Stomach (tissue), 19 donors: ENCODE measurements at regions of chr22 and their contacts with region 1.

Region 1: GRCh38 chr22:22959147-22959827 is 71.7 kb downstream of the IGLL5 start:
- DNase-seq: peak; percentile 87 to 94
- H3K4me3 ChIP-seq: no peak overlapping the region
- H3K27ac ChIP-seq: peak overlapping the region in 1 of 5 donors; percentile 38
- H3K4me1 ChIP-seq: peaks cover 5 to 20% (median 11%) of the 10 kb centered on the region in 4 donors
- H3K27me3 ChIP-seq: peaks cover 0 to 13% (median 3%) of the 10 kb centered on the region in 3 donors
- CTCF ChIP-seq: peak in 6 of 7 experiments; percentile 14 to 99 (median 86)
- EP300 ChIP-seq: no peak
- POLR2A ChIP-seq: no peak

Region 2: GRCh38 chr22:22849640-22850610 is 109.4 kb before region 1 on chr22:
- intact Hi-C with region 1: loop called (anchors 5 kb)
- DNase-seq: no peak
- H3K4me3 ChIP-seq: no peak overlapping the region
- H3K27ac ChIP-seq: no peak overlapping the region
- H3K4me1 ChIP-seq: no peaks in the 10 kb centered on the region
- H3K27me3 ChIP-seq: peaks cover 0 to 42% (median 0%) of the 10 kb centered on the region in 3 donors
- CTCF ChIP-seq: no peak
- EP300 ChIP-seq: no peak
- POLR2A ChIP-seq: no peak

Region 3: GRCh38 chr22:23128269-23129108 is 169.2 kb after region 1 on chr22:
- intact Hi-C with region 1: loop called (anchors 5 kb)
- DNase-seq: peak; percentile 84 to 87
- H3K4me3 ChIP-seq: no peak overlapping the region
- H3K27ac ChIP-seq: no peak overlapping the region
- H3K4me1 ChIP-seq: peaks cover 4 to 20% (median 13%) of the 10 kb centered on the region in 4 donors
- H3K27me3 ChIP-seq: no peaks in the 10 kb centered on the region
- CTCF ChIP-seq: peak in 5 of 7 experiments; percentile 59 to 87 (median 82)
- EP300 ChIP-seq: no peak
- POLR2A ChIP-seq: no peak

Region 4: GRCh38 chr22:23395530-23396361 is 436.5 kb after region 1 on chr22:
- intact Hi-C with region 1: loop called (anchors 10 kb)
- DNase-seq: no peak
- H3K4me3 ChIP-seq: no peak overlapping the region
- H3K27ac ChIP-seq: no peak overlapping the region
- H3K4me1 ChIP-seq: no peaks in the 10 kb centered on the region
- H3K27me3 ChIP-seq: no peaks in the 10 kb centered on the region
- CTCF ChIP-seq: no peak
- EP300 ChIP-seq: no peak
- POLR2A ChIP-seq: no peak